Activated CD4-positive, alpha-beta T cell treated with anti-CD3 and anti-CD28 coated beads, Interleukin-2, amount 10 ng/mL, durations not matched to agents 24 days and 14 days (primary cell): ENCODE measurements at regions of chr6 and their contacts with region 1.

Region 1: DNA sequence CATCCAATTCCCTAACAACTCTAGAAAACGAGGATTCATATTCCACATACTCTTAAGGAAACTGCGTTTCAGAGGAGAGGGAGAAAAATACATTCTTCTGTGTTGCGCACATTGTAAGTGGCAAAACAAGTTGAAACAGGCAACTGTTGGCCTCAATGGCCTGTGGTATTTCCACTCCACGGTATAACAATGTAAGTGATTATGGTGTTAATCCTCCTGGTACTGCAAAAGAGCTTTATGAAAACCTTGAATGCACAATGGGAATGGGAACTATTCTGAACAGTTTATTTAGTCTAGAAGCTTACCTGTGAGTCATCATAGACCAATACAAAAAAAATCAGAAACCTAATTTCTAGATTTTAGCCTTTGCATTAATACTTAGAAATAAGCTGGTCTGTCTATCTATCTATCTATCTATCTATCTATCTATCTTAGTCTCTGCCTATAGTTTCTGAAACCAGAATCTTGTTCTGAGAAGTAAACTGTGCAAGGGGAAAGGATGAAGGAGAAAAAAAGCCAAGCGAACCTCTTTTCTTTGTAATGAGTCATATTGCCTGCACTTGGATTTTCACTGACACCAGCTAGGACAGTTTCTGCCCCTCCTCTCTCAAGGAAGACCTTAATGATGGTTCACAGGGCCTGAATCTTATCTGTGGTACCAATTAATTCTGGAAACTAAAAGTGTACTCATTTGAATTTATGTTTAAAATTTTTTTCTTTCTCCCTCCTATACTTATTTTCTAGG is 101.5 kb downstream of the RNF144B start:
- DNase-seq: no peak
- H3K4me3 Mint-ChIP-seq: no peak overlapping the region
- H3K27ac Mint-ChIP-seq: no peak overlapping the region
- H3K4me1 Mint-ChIP-seq: peaks cover 6% of the 10 kb centered on the region
- H3K27me3 Mint-ChIP-seq: peaks cover 25% of the 10 kb centered on the region

Region 2: GRCh38 chr6:18387061-18387721 is 101.5 kb before region 1 on chr6 and contains the start of gene RNF144B:
- intact Hi-C with region 1: loop called (anchors 10 kb)
- DNase-seq: peak; percentile 82
- H3K4me3 Mint-ChIP-seq: peak within 1 kb of the TSS; percentile 91
- H3K27ac Mint-ChIP-seq: peak within 1 kb of the TSS; percentile 42
- H3K4me1 Mint-ChIP-seq: peaks cover 21% of the 10 kb centered on the region
- H3K27me3 Mint-ChIP-seq: peaks cover 20% of the 10 kb centered on the region
- total RNA-seq, gene RNF144B: 0.19 and 0.40 TPM in 2 replicates

Region 3: DNA sequence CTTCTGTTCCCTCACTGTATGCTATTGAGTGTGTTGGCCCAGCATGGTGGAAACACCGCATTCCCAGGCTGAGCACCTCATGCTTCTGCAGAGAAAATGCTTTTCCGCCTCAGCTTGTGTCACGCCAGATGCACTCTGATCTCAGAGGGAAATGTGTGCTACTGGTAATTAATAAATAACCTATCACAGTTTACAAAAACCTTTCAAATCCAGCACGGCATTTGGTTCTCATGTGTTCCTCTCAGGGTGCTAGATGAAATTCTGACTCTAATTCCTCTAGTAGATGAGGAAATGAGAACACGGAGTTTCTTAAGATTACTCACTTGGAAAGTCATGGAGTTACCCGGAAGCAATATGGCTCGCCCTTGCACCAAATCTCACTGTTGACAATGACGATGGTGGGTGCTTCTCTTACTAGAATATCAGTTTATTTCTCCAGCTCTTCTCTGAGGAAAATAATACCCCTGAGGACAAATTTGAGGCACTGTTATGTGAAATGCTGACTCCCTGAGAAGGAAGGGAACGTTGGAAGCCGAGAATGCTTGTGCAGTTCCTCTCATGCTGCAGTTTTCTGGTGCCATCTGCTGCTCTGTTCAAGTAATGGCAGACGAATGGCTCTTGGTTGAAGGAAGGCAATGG is 15.0 kb after region 1 on chr6:
- intact Hi-C with region 1: no loop called
- DNase-seq: peak; percentile 74
- H3K4me3 Mint-ChIP-seq: no peak overlapping the region
- H3K27ac Mint-ChIP-seq: no peak overlapping the region
- H3K4me1 Mint-ChIP-seq: peaks cover 1% of the 10 kb centered on the region
- H3K27me3 Mint-ChIP-seq: peaks cover 13% of the 10 kb centered on the region